ENCODE measurements at regions of chr2 and their contacts with region 1.

Region 1: DNA sequence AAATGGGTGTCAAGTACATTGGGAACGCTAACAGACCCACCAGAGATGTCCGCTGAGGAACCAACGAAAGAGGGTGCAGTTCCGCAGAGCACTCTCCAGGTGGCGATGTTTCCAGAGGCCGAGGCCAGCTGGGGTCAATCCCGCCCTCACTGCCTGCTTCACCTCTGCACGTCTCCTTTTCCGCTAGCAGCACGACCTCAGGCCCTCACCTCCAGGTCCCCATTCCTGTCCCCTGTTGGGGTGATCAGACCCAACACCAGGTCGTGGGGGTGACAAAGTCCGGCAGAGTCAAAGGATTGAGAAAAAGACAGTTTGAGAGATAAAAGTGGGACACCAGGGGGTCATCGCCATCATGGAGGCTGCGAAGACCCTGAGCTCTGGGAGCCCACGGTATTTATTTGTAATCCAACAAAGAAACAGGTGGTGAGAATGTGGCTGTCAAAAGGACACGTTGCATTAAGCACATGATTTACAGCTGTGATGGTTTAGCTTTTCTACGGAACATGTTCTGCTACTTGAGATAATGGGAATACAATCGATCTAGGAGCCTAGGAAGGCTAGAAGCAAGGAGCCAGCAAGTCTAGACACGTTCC is 27.3 kb downstream of the ZAP70 start:
- DNase-seq: no peak
- ATAC-seq: peak; percentile 78
- H3K4me3 Mint-ChIP-seq: no peak overlapping the region
- H3K27ac Mint-ChIP-seq: no peak overlapping the region
- H3K4me1 Mint-ChIP-seq: peaks cover 29% of the 10 kb centered on the region
- H3K27me3 Mint-ChIP-seq: no peaks in the 10 kb centered on the region
- CTCF ChIP-seq: peak; percentile 35

Region 2: GRCh38 chr2:96251721-96252292 is 1488.9 kb before region 1 on chr2:
- CTCF ChIA-PET with region 1: no interaction called
- POLR2A ChIA-PET with region 1: no interaction called
- intact Hi-C with region 1: no loop called
- DNase-seq: no peak
- ATAC-seq: no peak
- H3K4me3 Mint-ChIP-seq: no peak overlapping the region
- H3K27ac Mint-ChIP-seq: no peak overlapping the region
- H3K4me1 Mint-ChIP-seq: peaks cover 30% of the 10 kb centered on the region
- H3K27me3 Mint-ChIP-seq: no peaks in the 10 kb centered on the region
- CTCF ChIP-seq: no peak

Region 3: DNA sequence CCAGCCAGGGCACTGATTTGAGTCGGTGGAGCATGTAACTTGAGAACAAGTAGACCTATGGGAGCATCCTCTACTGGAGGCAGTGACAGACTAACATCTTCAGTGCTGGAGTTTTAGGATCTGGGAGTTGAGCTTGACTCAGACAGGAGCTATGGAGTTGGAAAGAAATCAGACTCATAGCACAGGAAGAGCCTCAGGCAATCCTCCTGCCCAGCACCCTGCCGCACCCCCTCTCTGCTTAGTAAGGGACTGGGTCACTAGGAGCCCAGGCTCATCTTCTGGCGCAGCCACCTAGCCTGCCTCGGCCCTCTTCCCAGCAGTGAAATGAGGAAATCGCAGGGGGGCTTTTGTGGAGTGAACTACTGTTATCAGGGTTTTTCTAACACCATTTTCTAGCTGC is 1200.5 kb before region 1 on chr2:
- CTCF ChIA-PET with region 1: no interaction called
- POLR2A ChIA-PET with region 1: no interaction called
- intact Hi-C with region 1: no loop called
- DNase-seq: peak; percentile 11
- ATAC-seq: no peak
- H3K4me3 Mint-ChIP-seq: no peak overlapping the region
- H3K27ac Mint-ChIP-seq: peak overlapping the region; percentile 41
- H3K4me1 Mint-ChIP-seq: peaks cover 54% of the 10 kb centered on the region
- H3K27me3 Mint-ChIP-seq: no peaks in the 10 kb centered on the region
- CTCF ChIP-seq: no peak

Region 4: GRCh38 chr2:97730245-97730644 is 10.4 kb before region 1 on chr2:
- CTCF ChIA-PET with region 1: interaction called, 10 read pairs
- POLR2A ChIA-PET with region 1: no interaction called
- intact Hi-C with region 1: no loop called
- DNase-seq: no peak
- ATAC-seq: no peak
- H3K4me3 Mint-ChIP-seq: no peak overlapping the region
- H3K27ac Mint-ChIP-seq: no peak overlapping the region
- H3K4me1 Mint-ChIP-seq: no peaks in the 10 kb centered on the region
- H3K27me3 Mint-ChIP-seq: no peaks in the 10 kb centered on the region
- CTCF ChIP-seq: no peak

Region 5: GRCh38 chr2:98188351-98189049 is 447.8 kb after region 1 on chr2:
- CTCF ChIA-PET with region 1: interaction called, 17 read pairs
- POLR2A ChIA-PET with region 1: interaction called, 3 read pairs
- intact Hi-C with region 1: no loop called
- DNase-seq: no peak
- ATAC-seq: no peak
- H3K4me3 Mint-ChIP-seq: no peak overlapping the region
- H3K27ac Mint-ChIP-seq: no peak overlapping the region
- H3K4me1 Mint-ChIP-seq: no peaks in the 10 kb centered on the region
- H3K27me3 Mint-ChIP-seq: peaks cover 2% of the 10 kb centered on the region
- CTCF ChIP-seq: no peak

Region 6: DNA sequence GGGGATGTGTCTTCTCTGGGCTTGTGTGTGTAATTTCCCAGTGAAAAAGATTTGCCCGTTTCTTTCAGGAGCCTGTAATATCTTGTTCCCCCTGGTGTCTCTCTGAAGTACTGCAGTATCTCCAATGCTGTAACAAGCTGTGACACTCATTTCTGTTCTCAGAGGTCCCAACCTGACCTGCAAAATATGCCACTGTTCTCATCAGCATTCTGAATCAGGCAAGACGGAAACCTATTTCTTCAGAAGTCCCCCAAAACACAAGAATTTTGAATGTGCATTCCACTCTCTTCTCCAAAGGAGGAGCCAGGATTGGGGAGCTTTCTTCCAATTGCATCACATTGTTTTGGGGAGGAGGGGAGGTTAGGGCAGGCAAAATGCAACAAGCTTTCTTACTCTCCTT is 528.6 kb after region 1 on chr2:
- CTCF ChIA-PET with region 1: interaction called, 9 read pairs
- POLR2A ChIA-PET with region 1: no interaction called
- intact Hi-C with region 1: loop called (anchors 1 kb)
- DNase-seq: no peak
- ATAC-seq: peak; percentile 75
- H3K4me3 Mint-ChIP-seq: no peak overlapping the region
- H3K27ac Mint-ChIP-seq: no peak overlapping the region
- H3K4me1 Mint-ChIP-seq: no peaks in the 10 kb centered on the region
- H3K27me3 Mint-ChIP-seq: peaks cover 7% of the 10 kb centered on the region
- CTCF ChIP-seq: no peak

Region 7: GRCh38 chr2:98385050-98385699 is 644.5 kb after region 1 on chr2:
- CTCF ChIA-PET with region 1: interaction called, 30 read pairs
- POLR2A ChIA-PET with region 1: no interaction called
- intact Hi-C with region 1: loop called (anchors 1 kb)
- DNase-seq: peak; percentile 58
- ATAC-seq: peak; percentile 78
- H3K4me3 Mint-ChIP-seq: no peak overlapping the region
- H3K27ac Mint-ChIP-seq: no peak overlapping the region
- H3K4me1 Mint-ChIP-seq: no peaks in the 10 kb centered on the region
- H3K27me3 Mint-ChIP-seq: peaks cover 10% of the 10 kb centered on the region
- CTCF ChIP-seq: peak; percentile 50